Dendritic cell treated with granulocyte-macrophage colony-stimulating factor and Interleukin-4, amounts not matched to agents 40 ng/mL and 50 ng/mL, for 4 days (primary cell): ENCODE measurements at regions of chrX and their contacts with region 1.

Region 1: GRCh38 chrX:78957768-78958130 is 12.6 kb downstream of the P2RY10 start:
- H3K4me3 Mint-ChIP-seq: no peak overlapping the region
- H3K27ac Mint-ChIP-seq: peak overlapping the region; percentile 35
- H3K4me1 Mint-ChIP-seq: peaks cover 23% of the 10 kb centered on the region
- H3K27me3 Mint-ChIP-seq: no peaks in the 10 kb centered on the region

Region 2: DNA sequence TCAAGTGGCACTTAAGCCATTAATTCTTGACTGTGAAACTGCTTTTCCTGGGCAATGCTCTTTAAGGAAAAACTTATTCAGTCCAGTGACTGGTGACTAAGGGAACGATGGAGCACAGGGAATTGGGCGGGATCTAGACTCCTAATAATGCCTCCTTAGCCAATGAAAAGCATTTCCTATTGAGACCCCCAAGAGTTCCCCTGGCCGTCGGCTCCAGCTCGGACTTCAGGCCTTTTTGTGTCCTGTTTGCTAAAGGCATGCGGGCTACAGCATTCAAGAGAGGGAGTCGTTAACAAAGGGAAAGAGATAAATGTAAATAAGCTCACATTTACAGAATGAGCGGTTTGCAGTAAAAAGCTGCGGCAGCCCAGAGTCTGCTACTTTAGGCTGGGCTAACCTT is 210.3 kb before region 1 on chrX and contains the start of gene LPAR4:
- intact Hi-C with region 1: no loop called
- H3K4me3 Mint-ChIP-seq: no peak within 1 kb of the TSS
- H3K27ac Mint-ChIP-seq: no peak within 1 kb of the TSS
- H3K4me1 Mint-ChIP-seq: no peaks in the 10 kb centered on the region
- H3K27me3 Mint-ChIP-seq: no peaks in the 10 kb centered on the region

Region 3: DNA sequence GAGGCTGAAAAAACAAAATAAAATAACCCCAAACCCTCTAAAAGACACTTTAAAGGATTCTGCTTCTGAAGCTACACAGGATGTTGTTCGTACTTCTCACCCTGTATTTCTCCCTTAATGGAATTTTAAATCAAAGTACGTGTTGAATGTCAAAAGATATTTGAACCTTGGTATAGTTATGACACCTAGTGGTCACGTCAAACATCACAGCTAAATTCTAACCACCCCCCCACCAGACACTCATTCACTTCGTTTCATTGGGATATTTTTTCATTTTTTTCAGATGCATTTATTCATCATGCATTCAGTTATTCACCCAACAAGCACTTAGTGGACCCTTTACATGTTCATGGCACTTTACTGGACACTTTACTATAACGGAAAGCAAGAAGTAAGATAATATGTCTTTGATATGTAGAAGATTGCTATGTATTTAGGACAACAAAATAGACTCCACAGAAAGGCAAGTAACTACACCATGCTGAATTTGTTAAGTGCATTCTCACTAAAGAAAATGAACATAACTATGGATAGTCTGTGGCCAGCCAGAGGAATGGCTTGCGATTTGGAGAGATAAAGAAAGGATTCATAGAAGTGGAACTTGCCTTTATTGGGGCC is 124.3 kb after region 1 on chrX:
- intact Hi-C with region 1: loop called (anchors 10 kb)
- H3K4me3 Mint-ChIP-seq: no peak overlapping the region
- H3K27ac Mint-ChIP-seq: peak overlapping the region; percentile 22
- H3K4me1 Mint-ChIP-seq: peaks cover 4% of the 10 kb centered on the region
- H3K27me3 Mint-ChIP-seq: no peaks in the 10 kb centered on the region

Region 4: GRCh38 chrX:79182616-79183015 is 224.9 kb after region 1 on chrX:
- intact Hi-C with region 1: no loop called
- H3K4me3 Mint-ChIP-seq: no peak overlapping the region
- H3K27ac Mint-ChIP-seq: no peak overlapping the region
- H3K4me1 Mint-ChIP-seq: no peaks in the 10 kb centered on the region
- H3K27me3 Mint-ChIP-seq: no peaks in the 10 kb centered on the region